Esophagus muscularis mucosa (tissue), 4 donors: ENCODE measurements at regions of chr17 and their contacts with region 1.

Region 1: DNA sequence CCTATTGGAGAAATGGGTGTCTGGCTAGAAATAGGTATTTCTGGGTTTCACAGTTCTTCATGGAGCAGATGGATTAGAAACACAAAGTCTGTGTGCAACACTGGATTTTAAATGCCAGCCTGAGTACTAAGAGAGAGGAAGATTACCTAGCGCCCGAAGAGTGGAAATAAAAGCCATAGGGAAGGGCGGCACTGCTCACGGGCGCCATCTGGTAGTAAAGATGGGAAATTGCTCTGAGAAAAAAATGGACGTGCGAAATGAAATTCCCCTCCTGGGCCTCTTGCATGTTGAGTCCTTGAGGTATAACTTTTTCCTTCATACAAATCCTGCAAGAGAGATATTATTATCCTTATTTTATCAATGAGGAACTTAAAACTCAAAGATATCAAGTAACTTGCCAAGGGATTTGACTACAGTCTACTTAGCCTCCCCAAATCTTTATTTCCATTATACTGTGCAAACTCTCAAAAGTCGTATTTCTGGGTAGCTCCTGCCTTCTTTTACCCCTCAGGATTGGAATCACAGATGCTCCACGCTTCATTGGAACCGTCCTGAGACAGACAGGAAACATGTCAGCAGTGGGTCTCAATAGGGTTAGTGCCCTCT is 72.8 kb downstream of the MMD start:
- DNase-seq: no peak
- H3K4me3 ChIP-seq: no peak overlapping the region
- H3K27ac ChIP-seq: no peak overlapping the region
- H3K4me1 ChIP-seq: peaks cover 0 to 11% (median 10%) of the 10 kb centered on the region in 4 donors
- H3K27me3 ChIP-seq: no peaks in the 10 kb centered on the region
- CTCF ChIP-seq: peak; percentile 85 to 94 (median 89)
- EP300 ChIP-seq: no peak
- POLR2A ChIP-seq: no peak

Region 2: GRCh38 chr17:54982399-54982798 is 366.5 kb before region 1 on chr17:
- intact Hi-C with region 1: loop called (anchors 5 kb)
- DNase-seq: no peak
- H3K4me3 ChIP-seq: no peak overlapping the region
- H3K27ac ChIP-seq: peak overlapping the region in 2 of 4 donors; percentile 20 to 54
- H3K4me1 ChIP-seq: peaks cover 0 to 29% (median 21%) of the 10 kb centered on the region in 4 donors
- H3K27me3 ChIP-seq: no peaks in the 10 kb centered on the region
- CTCF ChIP-seq: no peak
- EP300 ChIP-seq: no peak
- POLR2A ChIP-seq: no peak

Region 3: DNA sequence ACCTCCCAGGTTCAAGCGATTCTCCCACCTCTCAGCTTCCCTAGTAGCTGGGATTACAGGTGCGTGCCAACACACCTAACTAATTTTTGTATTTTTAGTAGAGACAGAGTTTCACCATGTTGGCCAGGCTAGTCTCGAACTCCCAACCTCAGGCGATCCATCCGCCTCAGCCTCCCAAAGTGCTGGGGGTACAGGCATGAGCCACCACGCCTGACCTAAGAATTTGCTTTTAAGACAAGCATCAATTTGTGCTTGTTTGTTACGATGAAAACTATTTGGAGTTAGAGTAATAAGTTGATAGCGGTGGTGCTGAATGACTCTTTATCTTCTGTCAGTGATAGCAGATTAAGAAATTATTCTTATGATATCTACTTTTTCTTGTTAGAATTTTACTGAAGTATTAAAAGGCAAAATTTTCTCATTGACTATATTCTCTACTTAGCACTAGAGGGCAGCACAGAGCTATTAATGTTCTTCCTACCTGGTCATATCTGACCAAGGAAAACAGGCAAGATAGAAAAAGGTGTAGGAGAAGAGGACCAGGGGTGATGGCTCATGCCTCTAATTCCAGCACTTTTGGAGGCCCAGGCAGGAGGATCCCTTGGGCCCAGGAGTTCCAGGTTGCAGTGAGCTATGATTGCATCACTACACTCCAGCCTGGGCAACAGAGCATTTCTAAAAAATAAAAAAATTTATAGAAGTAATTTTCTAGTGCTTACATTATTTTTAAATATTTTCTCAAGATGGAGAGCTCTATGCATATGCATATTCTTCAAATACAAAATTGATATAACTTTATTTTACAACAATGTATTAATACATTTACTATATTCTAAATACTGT is 355.8 kb before region 1 on chr17:
- intact Hi-C with region 1: loop called (anchors 5 kb)
- DNase-seq: no peak
- H3K4me3 ChIP-seq: no peak overlapping the region
- H3K27ac ChIP-seq: no peak overlapping the region
- H3K4me1 ChIP-seq: peaks cover 0 to 5% (median 2%) of the 10 kb centered on the region in 4 donors
- H3K27me3 ChIP-seq: no peaks in the 10 kb centered on the region
- CTCF ChIP-seq: peak; percentile 55 to 64 (median 56)
- EP300 ChIP-seq: no peak
- POLR2A ChIP-seq: no peak

Region 4: GRCh38 chr17:55238179-55238930 is 110.5 kb before region 1 on chr17:
- intact Hi-C with region 1: loop called (anchors 5 kb)
- DNase-seq: peak; percentile 98
- H3K4me3 ChIP-seq: peak overlapping the region; percentile 57 to 71 (median 60)
- H3K27ac ChIP-seq: peak overlapping the region; percentile 80 to 92 (median 82)
- H3K4me1 ChIP-seq: peaks cover 14 to 21% (median 20%) of the 10 kb centered on the region in 4 donors
- H3K27me3 ChIP-seq: no peaks in the 10 kb centered on the region
- CTCF ChIP-seq: peak in 1 of 3 experiments; percentile 16
- EP300 ChIP-seq: no peak
- POLR2A ChIP-seq: no peak

Region 5: GRCh38 chr17:55264645-55265298 is 84.1 kb before region 1 on chr17 and contains the start of gene HLF:
- intact Hi-C with region 1: loop called (anchors 2 kb)
- DNase-seq: peak; percentile 93
- H3K4me3 ChIP-seq: peak within 1 kb of the TSS; percentile 70 to 87 (median 76)
- H3K27ac ChIP-seq: peak within 1 kb of the TSS; percentile 92 to 99 (median 98)
- H3K4me1 ChIP-seq: peaks cover 13 to 38% (median 33%) of the 10 kb centered on the region in 4 donors
- H3K27me3 ChIP-seq: no peaks in the 10 kb centered on the region
- CTCF ChIP-seq: peak in 1 of 3 experiments; percentile 4
- EP300 ChIP-seq: no peak
- POLR2A ChIP-seq: no peak
- total RNA-seq, gene HLF: 137 to 176 (median 154) TPM

Region 6: DNA sequence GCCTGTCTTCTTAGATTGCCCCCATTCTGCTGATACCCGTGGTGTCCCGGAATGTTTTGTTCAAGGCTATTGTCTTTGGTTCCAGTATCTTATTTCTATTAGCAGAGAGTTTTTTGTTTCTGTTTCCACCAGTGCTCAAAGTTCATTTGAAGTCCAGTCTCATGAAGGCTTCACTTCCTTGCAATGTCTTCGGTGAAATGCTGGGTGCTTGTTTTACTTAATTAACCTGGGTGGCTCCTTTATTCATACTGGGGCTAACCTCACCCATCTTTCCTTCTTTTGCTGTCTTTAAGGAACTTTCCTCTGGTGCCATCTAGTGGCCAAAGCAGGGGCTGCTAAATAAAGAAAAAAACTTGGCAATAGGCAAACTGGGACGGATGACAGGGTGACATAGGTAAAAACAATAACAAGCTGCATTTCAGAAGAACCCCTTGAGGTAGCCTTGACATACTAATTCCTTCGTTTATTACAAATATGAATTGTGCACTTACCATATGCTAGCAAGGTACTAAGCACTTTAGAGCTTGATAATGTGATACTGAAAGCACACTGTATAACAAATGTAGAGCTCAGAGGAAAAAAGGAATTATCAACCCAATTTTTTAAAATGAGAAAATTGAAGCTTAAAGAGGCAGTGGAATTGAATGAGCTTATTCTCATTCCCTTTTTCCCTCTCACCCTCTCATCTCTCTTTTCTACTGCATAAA is 165.2 kb after region 1 on chr17:
- intact Hi-C with region 1: loop called (anchors 5 kb)
- DNase-seq: peak; percentile 94
- H3K4me3 ChIP-seq: no peak overlapping the region
- H3K27ac ChIP-seq: no peak overlapping the region
- H3K4me1 ChIP-seq: peaks cover 0 to 12% (median 11%) of the 10 kb centered on the region in 4 donors
- H3K27me3 ChIP-seq: no peaks in the 10 kb centered on the region
- CTCF ChIP-seq: peak; percentile 90 to 96 (median 92)
- EP300 ChIP-seq: no peak
- POLR2A ChIP-seq: no peak